ENCODE measurements at regions of chr9 and their contacts with region 1.

Region 1: DNA sequence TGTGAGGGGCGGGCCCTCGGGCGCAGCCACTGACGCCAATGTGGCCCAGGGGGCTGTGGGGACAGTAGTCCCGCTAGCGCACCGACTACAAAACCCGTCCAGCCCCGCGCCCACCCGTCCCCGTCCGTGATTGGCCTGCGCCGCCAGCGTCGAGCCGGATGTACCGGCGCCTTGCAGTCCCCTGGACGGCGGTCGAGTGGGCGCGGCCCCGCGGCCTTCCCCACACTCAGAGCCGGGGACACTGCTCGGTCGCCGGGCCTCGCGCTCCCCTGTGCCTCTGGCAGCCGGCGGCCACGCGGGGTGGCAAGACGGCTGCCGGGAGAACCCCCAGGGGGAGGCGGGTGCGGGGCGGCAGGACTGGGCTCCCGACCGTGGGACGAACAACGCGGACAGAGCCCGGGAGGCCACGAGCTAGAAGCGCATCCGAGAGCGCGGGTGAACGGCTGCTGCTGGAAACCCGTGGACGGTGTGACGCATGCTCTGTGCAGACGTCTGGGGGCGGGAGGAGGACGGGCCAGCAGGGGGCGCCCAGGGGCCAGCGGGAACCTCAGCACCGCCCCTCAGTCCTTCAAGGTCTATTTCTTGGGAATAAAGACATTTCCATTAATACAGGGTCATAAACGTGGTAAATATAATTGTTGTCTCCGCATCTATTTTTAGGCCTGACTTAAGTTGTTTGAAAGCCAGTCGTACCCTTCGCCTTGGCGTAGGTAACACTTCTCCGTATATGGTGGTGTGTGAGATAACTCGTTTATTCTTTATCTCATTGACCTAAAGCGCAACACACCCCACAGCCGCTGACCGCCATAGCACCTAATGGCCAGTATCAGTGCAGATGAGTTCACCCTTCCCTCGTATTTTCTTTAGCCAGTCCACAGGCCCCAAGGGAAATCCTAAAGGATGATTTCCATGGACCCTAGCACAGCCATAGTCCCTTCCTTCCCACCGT is 629 bp upstream of the BICD2 start:
- DNase-seq: peak; percentile 98 to 99
- H3K4me3 ChIP-seq: peak overlapping the region; percentile 93 to 99
- H3K27ac ChIP-seq: peak overlapping the region; percentile 100
- H3K4me1 ChIP-seq: peaks cover 10 to 33% of the 10 kb centered on the region in 2 donors
- H3K27me3 ChIP-seq: no peaks in the 10 kb centered on the region
- CTCF ChIP-seq: peak; percentile 90 to 93 (median 92)

Region 2: GRCh38 chr9:92115071-92115858 is 650.0 kb before region 1 on chr9 and contains the start of gene SPTLC1:
- intact Hi-C with region 1: loop called (anchors 2 kb)
- DNase-seq: peak; percentile 79 to 96
- H3K4me3 ChIP-seq: peak within 1 kb of the TSS; percentile 83 to 88
- H3K27ac ChIP-seq: peak within 1 kb of the TSS; percentile 82 to 88
- H3K4me1 ChIP-seq: peaks cover 3 to 6% of the 10 kb centered on the region in 2 donors
- H3K27me3 ChIP-seq: no peaks in the 10 kb centered on the region
- CTCF ChIP-seq: no peak
- total RNA-seq, gene SPTLC1: 48.0 TPM

Region 3: DNA sequence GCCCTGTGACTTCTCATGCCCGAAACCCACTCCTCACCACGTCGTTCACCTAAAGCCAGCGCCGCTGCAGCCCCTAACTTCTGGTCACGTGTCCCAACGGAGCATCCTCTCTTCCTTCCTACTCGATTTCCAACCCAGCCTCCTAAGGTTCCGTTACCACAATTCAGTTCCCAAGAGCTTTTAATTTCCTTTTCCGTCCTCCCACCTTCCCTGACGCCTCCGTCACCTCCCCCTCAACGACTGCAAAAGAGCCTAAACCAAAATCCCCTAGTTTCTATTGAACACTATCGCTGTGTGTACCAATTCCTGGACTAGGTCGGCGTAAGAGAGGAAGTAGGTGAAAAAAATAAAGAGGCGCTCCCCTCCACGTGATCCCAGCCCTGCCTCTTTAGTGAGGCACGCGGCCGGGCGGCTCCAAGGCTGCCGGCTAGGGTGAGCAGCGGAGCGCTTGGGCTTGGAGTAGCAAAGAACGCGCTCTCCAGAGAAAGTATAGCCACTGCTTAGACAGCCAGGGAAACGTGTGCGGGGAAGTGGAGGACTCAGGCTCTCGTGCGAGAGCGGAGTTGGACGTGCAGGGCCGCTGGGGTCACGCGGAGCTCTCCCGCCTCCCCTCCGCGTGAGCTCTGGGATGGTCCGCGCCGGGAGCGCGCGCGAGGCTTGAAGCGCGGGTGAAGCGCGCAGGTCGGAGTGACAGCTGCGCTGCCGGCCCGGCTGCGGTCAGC is 439.8 kb before region 1 on chr9 and contains the starts of genes CENPP and NOL8:
- intact Hi-C with region 1: loop called (anchors 10 kb)
- DNase-seq: peak; percentile 42 to 92
- H3K4me3 ChIP-seq: peak within 1 kb of the TSS; percentile 75 to 80
- H3K27ac ChIP-seq: peak within 1 kb of the TSS; percentile 93 to 97
- H3K4me1 ChIP-seq: peaks cover 0 to 16% of the 10 kb centered on the region in 2 donors
- H3K27me3 ChIP-seq: no peaks in the 10 kb centered on the region
- CTCF ChIP-seq: no peak
- total RNA-seq, gene CENPP: 0.43 TPM
- total RNA-seq, gene NOL8: 11.5 TPM

Region 4: GRCh38 chr9:92669890-92670708 is 95.2 kb before region 1 on chr9 and contains the start of gene IPPK:
- intact Hi-C with region 1: loop called (anchors 1 kb)
- DNase-seq: peak; percentile 93 to 100
- H3K4me3 ChIP-seq: peak within 1 kb of the TSS; percentile 78 to 98
- H3K27ac ChIP-seq: peak within 1 kb of the TSS; percentile 94 to 96
- H3K4me1 ChIP-seq: peaks cover 0 to 18% of the 10 kb centered on the region in 2 donors
- H3K27me3 ChIP-seq: no peaks in the 10 kb centered on the region
- CTCF ChIP-seq: no peak
- total RNA-seq, gene IPPK: 28.0 TPM

Region 5: GRCh38 chr9:92790542-92791527 is 25.6 kb after region 1 on chr9:
- intact Hi-C with region 1: loop called (anchors 1 kb)
- DNase-seq: peak in 1 of 2 donors; percentile 91
- H3K4me3 ChIP-seq: no peak overlapping the region
- H3K27ac ChIP-seq: no peak overlapping the region
- H3K4me1 ChIP-seq: no peaks in the 10 kb centered on the region
- H3K27me3 ChIP-seq: no peaks in the 10 kb centered on the region
- CTCF ChIP-seq: peak; percentile 66 to 85 (median 83)

Region 6: GRCh38 chr9:92877531-92878430 is 112.5 kb after region 1 on chr9 and contains the start of gene ZNF484:
- intact Hi-C with region 1: loop called (anchors 2 kb)
- DNase-seq: peak; percentile 88 to 99
- H3K4me3 ChIP-seq: peak within 1 kb of the TSS; percentile 80 to 82
- H3K27ac ChIP-seq: peak within 1 kb of the TSS; percentile 74 to 85
- H3K4me1 ChIP-seq: peaks cover 0 to 6% of the 10 kb centered on the region in 2 donors
- H3K27me3 ChIP-seq: no peaks in the 10 kb centered on the region
- CTCF ChIP-seq: no peak
- total RNA-seq, gene ZNF484: 16.9 TPM

Region 7: GRCh38 chr9:93134015-93134739 is 368.9 kb after region 1 on chr9 and contains the start of gene NINJ1:
- intact Hi-C with region 1: loop called (anchors 10 kb)
- DNase-seq: peak in 1 of 2 donors; percentile 86
- H3K4me3 ChIP-seq: peak within 1 kb of the TSS; percentile 77 to 91
- H3K27ac ChIP-seq: peak within 1 kb of the TSS; percentile 98 to 99
- H3K4me1 ChIP-seq: peaks cover 27 to 38% of the 10 kb centered on the region in 2 donors
- H3K27me3 ChIP-seq: no peaks in the 10 kb centered on the region
- CTCF ChIP-seq: peak in 1 of 3 experiments; percentile 21
- total RNA-seq, gene NINJ1: 156 TPM

Measured in ascending aorta (tissue), 2 donors.